Activated CD4-positive, alpha-beta T cell treated with anti-CD3 and anti-CD28 coated beads, Interleukin-2, amount 10 ng/mL, durations not matched to agents 24 days and 14 days (primary cell): ENCODE measurements at regions of chr3 and their contacts with region 1.

Region 1: DNA sequence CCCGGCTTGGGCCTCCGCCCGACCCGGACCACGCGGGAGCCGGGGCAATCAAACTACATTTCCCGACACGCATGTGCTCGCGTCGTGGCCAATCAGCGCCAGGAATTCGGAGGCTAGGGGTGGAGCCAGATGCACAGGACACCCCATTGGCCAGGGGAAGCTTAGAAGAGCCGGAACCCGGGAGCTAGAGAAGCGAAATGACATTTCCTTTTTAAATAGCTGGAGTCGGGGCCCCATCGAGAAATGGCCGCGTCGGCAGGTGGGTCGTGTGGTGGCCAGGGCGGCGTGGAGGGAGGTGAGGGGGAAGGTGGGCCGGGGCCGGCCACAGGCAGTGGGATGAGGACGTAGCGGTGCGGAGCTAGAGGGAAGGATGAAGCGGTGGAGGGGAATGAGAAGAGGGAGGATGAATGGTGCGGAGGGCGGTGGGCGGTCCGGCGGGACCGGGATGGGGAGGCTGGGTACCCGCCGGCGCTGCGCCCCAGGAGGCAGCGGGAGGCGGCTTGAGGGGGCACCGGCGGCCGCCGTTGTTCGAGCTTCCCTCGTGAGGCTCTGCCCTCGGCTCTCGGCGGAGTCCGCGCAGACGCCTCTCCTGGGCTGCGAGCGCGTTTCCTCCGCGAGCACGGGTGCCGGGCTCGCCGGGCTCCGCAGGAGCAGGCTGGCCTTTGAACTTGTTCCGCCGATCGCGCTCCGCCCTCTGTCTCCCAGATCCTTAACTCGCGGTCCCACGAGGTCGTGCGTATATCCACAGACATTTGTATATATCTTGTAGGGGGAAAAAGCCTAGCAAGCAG is at the start of gene KBTBD8:
- DNase-seq: peak; percentile 99
- H3K4me3 Mint-ChIP-seq: peak within 1 kb of the TSS; percentile 89
- H3K27ac Mint-ChIP-seq: peak within 1 kb of the TSS; percentile 92
- H3K4me1 Mint-ChIP-seq: peaks cover 29% of the 10 kb centered on the region
- H3K27me3 Mint-ChIP-seq: peaks cover 24% of the 10 kb centered on the region
- total RNA-seq, gene KBTBD8: 16.8 and 17.0 TPM in 2 replicates

Region 2: GRCh38 chr3:66442254-66443117 is 555.8 kb before region 1 on chr3:
- intact Hi-C with region 1: no loop called
- DNase-seq: no peak
- H3K4me3 Mint-ChIP-seq: no peak overlapping the region
- H3K27ac Mint-ChIP-seq: no peak overlapping the region
- H3K4me1 Mint-ChIP-seq: peaks cover 16% of the 10 kb centered on the region
- H3K27me3 Mint-ChIP-seq: no peaks in the 10 kb centered on the region

Region 3: GRCh38 chr3:66971891-66972551 is 26.3 kb before region 1 on chr3:
- intact Hi-C with region 1: loop called (anchors 1 kb)
- DNase-seq: peak; percentile 89
- H3K4me3 Mint-ChIP-seq: peak overlapping the region; percentile 78
- H3K27ac Mint-ChIP-seq: peak overlapping the region; percentile 66
- H3K4me1 Mint-ChIP-seq: peaks cover 13% of the 10 kb centered on the region
- H3K27me3 Mint-ChIP-seq: peaks cover 11% of the 10 kb centered on the region

Region 4: DNA sequence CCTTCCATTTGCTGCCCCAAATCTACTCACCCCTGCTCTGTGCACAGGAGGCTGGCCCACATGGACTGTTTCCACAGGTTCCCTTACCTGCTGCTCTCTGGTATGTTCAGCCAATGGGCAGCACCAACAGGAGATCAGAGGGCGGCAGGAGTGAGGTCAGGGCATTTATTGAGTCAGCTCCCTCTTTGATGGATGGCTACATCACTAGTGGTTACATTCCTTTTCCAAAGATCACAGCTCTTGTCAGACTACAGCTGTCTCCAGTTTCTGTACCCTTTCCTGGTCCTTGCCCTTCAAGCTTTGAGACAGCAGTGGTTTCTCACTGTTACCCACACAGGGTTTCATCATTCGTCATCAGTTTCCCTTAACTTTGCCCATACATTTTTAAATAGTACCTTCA is 331.1 kb after region 1 on chr3:
- intact Hi-C with region 1: no loop called
- DNase-seq: no peak
- H3K4me3 Mint-ChIP-seq: no peak overlapping the region
- H3K27ac Mint-ChIP-seq: peak overlapping the region; percentile 4
- H3K4me1 Mint-ChIP-seq: peaks cover 13% of the 10 kb centered on the region
- H3K27me3 Mint-ChIP-seq: peaks cover 3% of the 10 kb centered on the region